Calu3 (cell line): ENCODE measurements at regions of chr2 and their contacts with region 1.

Region 1: GRCh38 chr2:128754246-128754724 is 435.6 kb upstream of the HS6ST1 start:
- DNase-seq: no peak
- H3K4me3 Mint-ChIP-seq: no peak overlapping the region
- H3K27ac Mint-ChIP-seq: no peak overlapping the region
- H3K4me1 Mint-ChIP-seq: no peaks in the 10 kb centered on the region
- H3K27me3 Mint-ChIP-seq: peaks cover 39% of the 10 kb centered on the region
- CTCF ChIP-seq: no peak

Region 2: GRCh38 chr2:128736689-128737545 is 17.4 kb before region 1 on chr2:
- CTCF ChIA-PET with region 1: no interaction called
- intact Hi-C with region 1: loop called (anchors 1 kb)
- DNase-seq: peak; percentile 74
- H3K4me3 Mint-ChIP-seq: no peak overlapping the region
- H3K27ac Mint-ChIP-seq: no peak overlapping the region
- H3K4me1 Mint-ChIP-seq: no peaks in the 10 kb centered on the region
- H3K27me3 Mint-ChIP-seq: peaks cover 10% of the 10 kb centered on the region
- CTCF ChIP-seq: peak; percentile 81

Region 3: DNA sequence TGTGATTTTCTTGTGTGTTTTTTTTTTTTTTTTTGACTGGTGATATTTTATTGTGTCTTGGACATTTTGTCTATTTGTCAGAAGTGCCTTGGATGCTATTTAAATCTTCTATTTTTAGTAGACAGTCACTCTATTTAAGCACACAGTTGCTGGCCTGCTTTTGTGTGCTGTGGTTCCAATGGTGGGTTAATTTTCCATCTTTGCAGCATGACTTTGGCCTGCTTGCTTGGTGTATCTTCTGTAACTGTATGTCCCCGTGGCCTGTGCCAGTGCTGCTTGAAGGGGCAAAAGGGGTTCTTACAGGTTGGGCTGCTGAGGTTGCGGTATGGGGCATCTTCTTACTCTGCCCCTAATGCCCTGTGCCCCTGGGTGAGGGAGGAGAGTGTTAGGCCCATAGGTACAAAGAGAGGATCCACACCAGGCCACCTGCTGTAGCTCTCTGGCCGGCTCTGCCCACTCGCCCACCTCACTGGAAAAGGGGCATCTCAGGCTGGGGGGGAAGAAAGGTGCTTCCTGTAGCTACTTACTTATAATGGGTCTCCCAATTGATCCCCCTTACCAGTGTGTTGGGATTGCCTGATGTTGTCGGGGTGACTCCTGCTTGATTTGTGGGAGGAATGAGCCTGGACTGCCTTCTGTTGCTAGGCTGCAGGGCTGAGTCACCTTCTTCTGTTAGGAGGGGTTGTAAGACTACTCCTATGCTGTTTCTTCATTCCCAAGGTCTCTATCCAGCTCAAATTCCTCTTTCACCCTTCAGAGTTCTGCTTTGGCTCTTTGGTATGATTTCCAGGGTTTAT is 54.4 kb after region 1 on chr2:
- CTCF ChIA-PET with region 1: no interaction called
- intact Hi-C with region 1: no loop called
- DNase-seq: no peak
- H3K4me3 Mint-ChIP-seq: no peak overlapping the region
- H3K27ac Mint-ChIP-seq: no peak overlapping the region
- H3K4me1 Mint-ChIP-seq: no peaks in the 10 kb centered on the region
- H3K27me3 Mint-ChIP-seq: peaks cover 8% of the 10 kb centered on the region
- CTCF ChIP-seq: no peak

Region 4: DNA sequence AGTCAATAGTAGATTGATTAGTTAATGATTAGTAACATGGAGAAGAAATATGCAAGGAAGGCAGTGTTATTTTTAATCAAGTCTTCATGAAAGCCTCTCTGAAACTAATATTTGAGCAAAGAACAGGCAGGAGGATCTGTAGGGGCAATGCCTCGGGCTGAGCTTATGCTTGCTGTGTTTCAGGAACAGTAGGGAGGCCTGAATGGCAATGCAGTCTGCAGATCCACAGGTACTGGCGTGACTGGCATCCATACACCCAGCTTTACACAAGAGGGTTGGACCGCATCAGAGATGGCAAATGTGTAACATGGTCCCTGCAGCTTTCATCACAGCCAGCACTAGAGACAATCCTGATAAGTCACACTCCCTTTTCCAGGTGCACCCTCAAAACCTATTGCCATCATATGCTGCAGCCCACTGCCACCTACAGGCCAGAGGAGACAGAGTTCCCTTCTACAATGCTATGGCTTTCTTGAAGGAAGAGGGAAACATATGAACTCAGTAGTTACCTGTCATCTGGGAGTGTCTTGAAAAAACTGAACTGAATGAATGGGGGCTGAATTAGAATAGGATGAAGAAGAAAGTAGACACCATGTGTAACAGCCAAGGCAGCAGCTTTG is 642.8 kb after region 1 on chr2:
- CTCF ChIA-PET with region 1: no interaction called
- intact Hi-C with region 1: loop called (anchors 5 kb)
- DNase-seq: peak; percentile 25
- H3K4me3 Mint-ChIP-seq: no peak overlapping the region
- H3K27ac Mint-ChIP-seq: no peak overlapping the region
- H3K4me1 Mint-ChIP-seq: no peaks in the 10 kb centered on the region
- H3K27me3 Mint-ChIP-seq: no peaks in the 10 kb centered on the region
- CTCF ChIP-seq: peak; percentile 20